H1 (cell line): ENCODE measurements at regions of chr6 and their contacts with region 1.

Region 1: DNA sequence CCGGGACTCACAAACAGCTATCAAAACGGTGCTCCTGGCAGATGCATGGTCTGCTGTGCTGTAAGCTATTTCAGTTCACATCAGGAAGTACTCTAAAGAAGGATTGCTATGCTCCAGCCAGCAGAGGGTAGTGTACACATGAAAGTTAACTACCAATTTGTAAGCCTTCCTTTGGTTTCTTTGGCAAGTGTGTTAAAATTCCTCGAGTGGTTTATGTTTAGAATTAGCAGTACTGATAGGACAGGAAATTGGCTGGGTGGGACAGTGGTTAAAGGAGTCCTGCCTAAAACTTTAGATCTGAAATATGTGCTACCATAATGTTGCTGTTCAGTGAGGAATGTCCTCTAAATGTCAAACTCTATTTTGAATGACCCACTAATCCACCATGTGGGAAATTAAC is 47.4 kb downstream of the TRMT11 start:
- DNase-seq: no peak
- H3K4me3 ChIP-seq: no peak overlapping the region
- H3K27ac ChIP-seq: no peak overlapping the region
- H3K4me1 ChIP-seq: no peaks in the 10 kb centered on the region; a peak in 2 of 7 replicates
- H3K27me3 ChIP-seq: no peaks in the 10 kb centered on the region
- CTCF ChIP-seq: peak in 2 of 3 experiments; percentile 48 to 66; a peak in 3 of 4 replicates
- EP300 ChIP-seq: no peak
- POLR2A ChIP-seq: no peak
- RAD21 ChIP-seq: peak; percentile 71 to 75

Region 2: DNA sequence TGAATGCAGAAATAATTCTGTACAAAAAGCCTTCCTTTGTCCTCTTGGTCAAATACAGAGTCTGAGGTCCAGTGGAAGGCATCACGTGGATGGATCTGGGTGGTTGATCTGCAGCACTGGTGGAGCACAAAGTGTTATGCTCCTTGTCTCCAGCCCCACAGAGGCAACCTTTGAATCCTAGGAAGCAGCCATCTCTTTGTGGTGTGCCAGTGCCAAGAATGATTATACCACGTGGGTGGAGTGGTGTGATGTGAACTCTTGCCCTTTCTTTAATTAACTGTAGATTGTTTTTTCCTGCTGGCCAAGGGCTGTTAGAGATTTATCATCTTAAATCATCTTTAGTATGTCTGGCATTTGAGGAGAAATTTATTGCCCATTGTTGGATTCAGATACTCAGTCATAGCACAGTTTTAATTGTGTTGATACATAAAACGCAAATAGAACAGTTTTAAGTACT is 211.8 kb before region 1 on chr6:
- CTCF ChIA-PET with region 1: no interaction called
- POLR2A ChIA-PET with region 1: no interaction called
- DNase-seq: no peak
- H3K4me3 ChIP-seq: no peak overlapping the region
- H3K27ac ChIP-seq: no peak overlapping the region
- H3K4me1 ChIP-seq: no peaks in the 10 kb centered on the region
- H3K27me3 ChIP-seq: peaks cover 0 to 2% (median 0%) of the 10 kb centered on the region in 4 experiments; a peak in 1 of 7 replicates
- CTCF ChIP-seq: no peak
- EP300 ChIP-seq: no peak
- POLR2A ChIP-seq: no peak
- RAD21 ChIP-seq: no peak

Region 3: DNA sequence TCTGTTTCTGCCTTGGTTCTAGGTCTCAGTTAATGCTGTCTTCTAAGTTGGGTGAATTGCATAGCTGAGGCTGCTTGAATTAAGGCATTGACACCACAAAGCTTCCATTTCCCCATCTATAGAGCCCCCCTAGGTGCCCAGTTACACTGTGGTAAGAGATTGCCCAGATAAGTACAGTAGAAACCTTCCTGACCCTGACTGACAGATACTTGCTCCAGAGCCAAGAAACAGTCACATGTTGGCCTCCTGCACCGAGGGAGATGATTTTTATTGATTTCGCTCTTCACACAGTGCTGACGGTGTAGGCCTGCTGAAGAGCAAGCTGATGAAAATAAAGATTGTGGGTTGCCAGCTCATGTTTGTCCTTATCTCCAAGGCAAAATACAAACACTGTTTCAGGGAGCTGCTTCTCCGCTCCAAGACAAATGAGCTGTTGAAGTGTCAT is 20.6 kb after region 1 on chr6:
- CTCF ChIA-PET with region 1: interaction called, 10 read pairs
- POLR2A ChIA-PET with region 1: interaction called, 6 read pairs
- DNase-seq: no peak
- H3K4me3 ChIP-seq: no peak overlapping the region
- H3K27ac ChIP-seq: no peak overlapping the region
- H3K4me1 ChIP-seq: peaks cover 0 to 6% (median 0%) of the 10 kb centered on the region in 4 experiments; a peak in 1 of 7 replicates
- H3K27me3 ChIP-seq: no peaks in the 10 kb centered on the region
- CTCF ChIP-seq: no peak
- EP300 ChIP-seq: no peak
- POLR2A ChIP-seq: no peak
- RAD21 ChIP-seq: no peak